H1 (cell line): ENCODE measurements at regions of chr12 and their contacts with region 1.

Region 1: DNA sequence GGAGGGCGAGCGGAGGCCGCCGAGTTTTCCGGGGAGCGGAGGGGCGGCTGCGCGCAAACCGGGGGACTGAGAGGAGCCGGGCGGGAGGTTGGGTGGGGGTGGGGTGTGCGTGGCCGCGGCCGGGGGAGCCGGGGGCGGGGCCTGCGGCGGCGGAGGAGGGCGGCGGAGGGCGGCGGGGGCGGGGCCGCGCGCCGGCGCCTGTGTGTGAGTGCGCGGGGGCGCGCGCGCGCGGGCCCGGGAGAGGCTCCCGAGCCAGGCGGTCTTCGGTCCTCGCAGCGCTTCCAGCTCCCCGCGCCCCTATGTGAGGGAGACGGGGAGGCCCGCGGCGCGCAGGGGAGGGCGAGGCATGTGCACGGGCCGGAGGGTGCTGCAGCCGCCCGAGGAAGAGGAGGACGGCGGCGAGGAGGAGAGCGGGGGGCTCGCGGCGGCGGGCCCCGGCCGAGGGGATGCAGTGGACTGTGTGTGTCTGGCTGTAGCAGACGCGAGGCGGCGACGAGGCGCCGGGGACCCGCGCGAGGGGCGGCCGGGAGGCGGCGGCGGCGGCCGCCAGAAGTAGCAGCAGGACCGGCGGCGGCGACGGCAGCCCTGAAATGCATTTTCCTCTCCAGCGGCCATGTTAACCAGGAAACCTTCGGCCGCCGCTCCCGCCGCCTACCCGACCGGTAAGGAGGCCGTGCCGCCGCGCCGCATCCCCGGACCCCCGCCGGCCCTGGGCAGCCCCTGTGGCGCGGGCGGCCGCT is at the start of gene DYRK2:
- DNase-seq: peak; percentile 19 to 84
- H3K4me3 ChIP-seq: peak within 1 kb of the TSS; percentile 79 to 99 (median 92)
- H3K27ac ChIP-seq: peak within 1 kb of the TSS; percentile 82
- H3K4me1 ChIP-seq: peaks cover 0 to 14% (median 10%) of the 10 kb centered on the region in 4 experiments; a peak in 4 of 7 replicates
- H3K27me3 ChIP-seq: no peaks in the 10 kb centered on the region
- CTCF ChIP-seq: no peak
- EP300 ChIP-seq: peak in 1 of 2 experiments; percentile 11; a peak in 1 of 3 replicates
- POLR2A ChIP-seq: peak; percentile 82 to 89
- RAD21 ChIP-seq: no peak
- total RNA-seq, gene DYRK2: 31.6 and 34.9 TPM in 2 replicates

Region 2: DNA sequence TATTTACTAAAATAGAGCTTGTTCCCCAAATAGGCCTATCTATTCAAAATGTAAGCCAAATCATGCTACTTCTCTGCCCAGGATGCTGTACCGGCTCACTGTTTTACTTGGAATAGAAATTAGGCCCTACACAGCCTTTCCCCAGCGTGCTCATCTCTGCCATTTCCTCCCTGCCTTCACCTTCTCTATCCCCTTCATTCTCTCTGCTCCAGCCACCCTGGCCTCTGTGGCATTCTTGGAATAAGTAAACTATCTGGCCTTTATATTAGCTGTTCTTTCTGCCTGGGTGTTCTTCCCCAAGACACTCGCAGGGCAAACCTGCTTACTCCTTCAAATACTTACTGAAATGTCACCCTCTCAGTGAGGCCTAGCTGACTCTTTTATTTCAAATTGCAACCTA is 31.1 kb before region 1 on chr12:
- CTCF ChIA-PET with region 1: no interaction called
- POLR2A ChIA-PET with region 1: no interaction called
- DNase-seq: no peak
- H3K4me3 ChIP-seq: no peak overlapping the region
- H3K27ac ChIP-seq: no peak overlapping the region
- H3K4me1 ChIP-seq: no peaks in the 10 kb centered on the region
- H3K27me3 ChIP-seq: no peaks in the 10 kb centered on the region
- CTCF ChIP-seq: no peak
- EP300 ChIP-seq: no peak
- POLR2A ChIP-seq: no peak
- RAD21 ChIP-seq: no peak

Region 3: DNA sequence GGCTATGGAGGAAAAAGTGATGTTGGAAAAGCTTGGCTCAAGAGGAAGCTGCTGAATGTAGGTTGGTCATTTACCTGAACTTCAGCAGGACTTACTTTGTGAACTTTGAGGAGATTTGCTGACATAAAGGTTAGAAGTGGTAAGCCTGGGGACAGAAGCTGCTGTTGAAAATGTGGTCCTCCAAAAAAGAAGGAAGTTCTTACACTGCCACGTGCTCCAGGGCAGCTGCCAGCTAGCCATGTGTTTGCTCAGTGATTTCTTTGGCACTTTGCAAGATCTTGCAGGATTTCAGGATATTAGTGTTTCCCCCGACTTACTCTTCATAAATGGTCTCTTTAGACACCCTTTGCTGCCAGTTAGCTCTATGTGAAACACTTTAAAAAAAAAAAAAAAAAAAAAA is 15.0 kb before region 1 on chr12:
- CTCF ChIA-PET with region 1: interaction called, 4 read pairs
- POLR2A ChIA-PET with region 1: interaction called, 12 read pairs
- DNase-seq: no peak
- H3K4me3 ChIP-seq: no peak overlapping the region
- H3K27ac ChIP-seq: no peak overlapping the region
- H3K4me1 ChIP-seq: peaks cover 0 to 16% (median 10%) of the 10 kb centered on the region in 4 experiments; a peak in 5 of 7 replicates
- H3K27me3 ChIP-seq: no peaks in the 10 kb centered on the region
- CTCF ChIP-seq: no peak
- EP300 ChIP-seq: no peak
- POLR2A ChIP-seq: no peak
- RAD21 ChIP-seq: no peak